ENCODE measurements at regions of chr5 and their contacts with region 1.

Region 1: DNA sequence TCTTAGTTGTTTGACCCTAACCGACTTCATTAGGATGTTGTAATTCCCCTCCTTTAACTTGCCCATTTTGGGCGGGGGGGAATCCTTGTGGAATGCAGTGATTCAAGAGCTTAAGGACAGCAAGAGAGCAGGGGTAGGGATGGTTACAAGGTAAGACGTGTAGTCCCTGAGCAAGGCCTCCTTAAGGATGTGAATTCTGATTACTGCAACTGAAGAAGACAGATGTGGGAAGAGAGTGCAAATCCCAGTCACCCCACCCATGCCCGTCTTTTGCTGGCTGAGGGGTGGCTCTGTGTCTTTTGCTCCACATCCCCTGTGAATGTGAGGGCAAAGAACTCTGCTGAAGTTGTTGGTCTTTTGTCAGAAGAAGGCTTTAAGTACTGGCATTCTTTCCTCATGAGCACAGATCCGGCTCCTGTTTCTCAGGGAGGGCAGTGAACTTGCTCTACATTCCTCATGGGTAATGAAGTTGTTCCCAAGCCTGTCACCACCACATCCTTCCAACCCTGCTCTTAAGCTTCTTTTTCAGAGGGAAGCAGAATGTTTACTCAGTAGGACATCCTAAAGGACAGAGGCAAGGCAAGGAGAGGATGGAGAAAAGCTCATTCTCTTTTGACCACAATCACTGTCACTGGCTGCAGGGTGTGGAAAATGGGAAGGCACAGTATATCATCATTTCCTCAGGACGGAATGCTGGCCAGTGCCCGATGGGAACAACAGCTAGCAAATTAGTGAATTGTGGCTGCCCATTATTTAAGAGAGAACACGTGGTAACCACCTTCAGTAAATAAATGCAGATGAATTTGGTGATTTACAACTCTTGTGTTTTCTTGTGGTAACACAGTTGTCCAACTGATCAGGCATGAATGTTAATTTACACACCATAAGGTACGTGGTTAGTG is 61.5 kb downstream of the RAI14 start:
- DNase-seq: peak; percentile 97
- ATAC-seq: peak; percentile 88
- H3K4me3 ChIP-seq: peak overlapping the region; percentile 48; the same call in 1 of the 2 replicates
- H3K27ac ChIP-seq: peak overlapping the region; percentile 99
- H3K4me1 ChIP-seq: peaks cover 51% of the 10 kb centered on the region
- H3K27me3 ChIP-seq: no peaks in the 10 kb centered on the region
- CTCF ChIP-seq: no peak

Region 2: GRCh38 chr5:34007621-34008600 is 709.8 kb before region 1 on chr5 and contains the start of gene AMACR:
- CTCF ChIA-PET with region 1: no interaction called
- POLR2A ChIA-PET with region 1: no interaction called
- intact Hi-C with region 1: loop called (anchors 10 kb)
- DNase-seq: peak; percentile 97
- ATAC-seq: peak; percentile 90
- H3K4me3 ChIP-seq: peak within 1 kb of the TSS; percentile 82
- H3K27ac ChIP-seq: peak within 1 kb of the TSS; percentile 74
- H3K4me1 ChIP-seq: peaks cover 28% of the 10 kb centered on the region
- H3K27me3 ChIP-seq: no peaks in the 10 kb centered on the region
- CTCF ChIP-seq: no peak
- total RNA-seq, gene AMACR: 12.3 and 12.7 TPM in 2 replicates

Region 3: GRCh38 chr5:34608859-34609648 is 108.6 kb before region 1 on chr5:
- CTCF ChIA-PET with region 1: no interaction called
- POLR2A ChIA-PET with region 1: no interaction called
- intact Hi-C with region 1: loop called (anchors 2 kb)
- DNase-seq: peak; percentile 92
- ATAC-seq: peak; percentile 72
- H3K4me3 ChIP-seq: peak overlapping the region; percentile 19; the same call in 1 of the 2 replicates
- H3K27ac ChIP-seq: peak overlapping the region; percentile 95
- H3K4me1 ChIP-seq: peaks cover 43% of the 10 kb centered on the region
- H3K27me3 ChIP-seq: no peaks in the 10 kb centered on the region
- CTCF ChIP-seq: no peak

Region 4: DNA sequence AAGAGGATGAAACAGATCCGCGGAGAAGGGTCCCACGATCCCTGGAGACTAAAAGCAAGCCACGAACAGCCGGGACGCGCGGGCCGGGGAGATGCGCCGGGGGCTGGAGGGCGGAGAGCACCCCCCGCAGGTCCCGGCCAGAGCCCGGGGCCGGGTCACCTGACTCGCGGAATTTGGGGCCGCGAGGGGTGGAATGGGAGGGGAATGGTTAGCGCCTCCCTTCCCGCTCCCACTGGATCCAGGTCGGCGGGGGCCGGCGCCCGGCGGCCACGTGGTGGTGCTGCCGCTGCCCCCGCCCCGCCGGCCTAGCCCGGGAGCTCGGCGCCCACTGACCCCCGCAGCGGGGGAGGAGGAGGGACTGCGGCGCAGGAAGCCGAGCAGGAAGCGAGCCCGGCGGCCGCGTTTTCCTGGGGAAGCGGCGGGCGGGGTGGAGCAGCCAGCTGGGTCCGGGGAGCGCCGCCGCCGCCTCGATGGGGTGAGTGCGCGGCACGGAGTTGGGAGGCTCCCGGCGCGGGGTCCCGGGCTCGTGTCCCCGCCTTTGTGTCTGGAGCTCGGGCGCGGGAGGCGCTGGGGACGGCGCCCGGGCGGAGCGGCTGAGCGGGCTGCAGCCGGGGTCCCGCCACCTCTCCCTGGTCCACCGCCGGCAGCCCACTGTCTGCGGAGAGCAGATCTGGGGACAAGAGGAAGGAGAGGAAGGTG is 61.5 kb before region 1 on chr5 and contains the start of gene RAI14:
- CTCF ChIA-PET with region 1: no interaction called
- POLR2A ChIA-PET with region 1: interaction called, 4 read pairs
- intact Hi-C with region 1: loop called (anchors 1 kb)
- DNase-seq: peak; percentile 86
- ATAC-seq: peak; percentile 71
- H3K4me3 ChIP-seq: peak within 1 kb of the TSS; percentile 97
- H3K27ac ChIP-seq: peak within 1 kb of the TSS; percentile 89
- H3K4me1 ChIP-seq: peaks cover 37% of the 10 kb centered on the region
- H3K27me3 ChIP-seq: no peaks in the 10 kb centered on the region
- CTCF ChIP-seq: no peak
- total RNA-seq, gene RAI14: 54.4 and 73.5 TPM in 2 replicates

Region 5: DNA sequence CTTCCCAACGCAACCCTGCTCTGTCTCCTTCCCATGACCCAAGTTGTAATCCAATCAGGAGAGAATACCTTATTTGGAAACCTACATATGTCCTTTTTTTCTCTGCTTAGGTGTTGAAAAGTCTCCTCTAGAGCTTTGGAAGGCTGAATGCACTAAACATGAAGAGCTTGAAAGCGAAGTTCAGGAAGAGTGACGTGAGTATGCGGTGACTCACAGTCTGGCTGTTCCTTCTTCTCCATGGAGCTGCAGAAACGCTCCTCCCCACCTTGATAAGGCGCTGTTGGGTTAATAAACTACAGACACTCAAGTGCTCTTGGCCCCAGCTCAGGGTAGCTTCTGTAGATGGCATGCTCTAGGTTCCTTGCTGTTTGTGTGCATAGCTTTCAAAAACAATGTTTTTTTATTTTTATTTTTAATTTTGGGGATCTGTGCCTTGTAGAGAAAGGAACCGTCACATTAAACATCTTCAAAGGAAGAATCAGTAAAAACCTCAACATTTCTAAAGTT is 30.9 kb before region 1 on chr5:
- CTCF ChIA-PET with region 1: interaction called, 5 read pairs
- POLR2A ChIA-PET with region 1: no interaction called
- intact Hi-C with region 1: loop called (anchors 1 kb)
- DNase-seq: peak; percentile 93
- ATAC-seq: peak; percentile 85
- H3K4me3 ChIP-seq: no peak overlapping the region
- H3K27ac ChIP-seq: peak overlapping the region; percentile 72
- H3K4me1 ChIP-seq: peaks cover 53% of the 10 kb centered on the region
- H3K27me3 ChIP-seq: no peaks in the 10 kb centered on the region
- CTCF ChIP-seq: 0 out of 2 replicates have a peak, but pooled peaks have one; percentile 11

Region 6: GRCh38 chr5:34751807-34752736 is 34.4 kb after region 1 on chr5:
- CTCF ChIA-PET with region 1: no interaction called
- POLR2A ChIA-PET with region 1: interaction called, 3 read pairs
- intact Hi-C with region 1: loop called (anchors 1 kb)
- DNase-seq: peak; percentile 19
- ATAC-seq: peak; percentile 71
- H3K4me3 ChIP-seq: no peak overlapping the region
- H3K27ac ChIP-seq: peak overlapping the region; percentile 88
- H3K4me1 ChIP-seq: peaks cover 13% of the 10 kb centered on the region
- H3K27me3 ChIP-seq: no peaks in the 10 kb centered on the region
- CTCF ChIP-seq: no peak

Region 7: DNA sequence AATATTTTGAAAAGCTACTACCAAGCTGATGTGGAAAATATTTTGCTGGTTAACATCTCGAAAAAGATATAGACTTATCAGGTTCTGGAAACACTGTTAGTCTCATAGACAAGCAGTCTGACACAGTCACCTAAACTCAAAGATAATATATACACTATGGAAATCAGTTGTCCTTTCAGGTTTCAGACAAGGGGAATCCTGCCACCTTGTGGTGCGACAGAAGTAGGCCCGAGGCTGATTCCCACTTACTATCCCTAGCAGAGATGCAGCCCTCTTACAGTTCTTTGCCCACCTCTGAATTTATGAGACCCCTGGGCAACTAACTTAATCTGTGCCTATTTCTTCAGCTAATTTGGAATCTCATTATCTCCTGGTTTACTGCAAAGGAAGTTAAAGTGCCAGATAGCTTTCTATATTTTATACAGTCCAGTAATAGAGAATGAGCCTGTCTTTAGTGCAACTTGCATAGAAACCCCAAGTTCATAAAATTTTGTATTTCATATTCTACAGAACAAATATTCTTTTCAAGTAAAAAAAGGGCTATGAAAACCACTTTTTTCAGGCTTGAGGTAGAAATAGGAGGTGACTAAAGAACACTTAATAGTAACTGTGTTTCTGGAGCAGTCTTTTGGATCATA is 180.7 kb after region 1 on chr5:
- CTCF ChIA-PET with region 1: no interaction called
- POLR2A ChIA-PET with region 1: no interaction called
- intact Hi-C with region 1: no loop called
- DNase-seq: peak; percentile 80
- ATAC-seq: peak; percentile 96
- H3K4me3 ChIP-seq: no peak overlapping the region
- H3K27ac ChIP-seq: no peak overlapping the region
- H3K4me1 ChIP-seq: peaks cover 14% of the 10 kb centered on the region
- H3K27me3 ChIP-seq: no peaks in the 10 kb centered on the region
- CTCF ChIP-seq: peak; percentile 93